ENCODE measurements at regions of chr14 and their contacts with region 1.

Region 1: DNA sequence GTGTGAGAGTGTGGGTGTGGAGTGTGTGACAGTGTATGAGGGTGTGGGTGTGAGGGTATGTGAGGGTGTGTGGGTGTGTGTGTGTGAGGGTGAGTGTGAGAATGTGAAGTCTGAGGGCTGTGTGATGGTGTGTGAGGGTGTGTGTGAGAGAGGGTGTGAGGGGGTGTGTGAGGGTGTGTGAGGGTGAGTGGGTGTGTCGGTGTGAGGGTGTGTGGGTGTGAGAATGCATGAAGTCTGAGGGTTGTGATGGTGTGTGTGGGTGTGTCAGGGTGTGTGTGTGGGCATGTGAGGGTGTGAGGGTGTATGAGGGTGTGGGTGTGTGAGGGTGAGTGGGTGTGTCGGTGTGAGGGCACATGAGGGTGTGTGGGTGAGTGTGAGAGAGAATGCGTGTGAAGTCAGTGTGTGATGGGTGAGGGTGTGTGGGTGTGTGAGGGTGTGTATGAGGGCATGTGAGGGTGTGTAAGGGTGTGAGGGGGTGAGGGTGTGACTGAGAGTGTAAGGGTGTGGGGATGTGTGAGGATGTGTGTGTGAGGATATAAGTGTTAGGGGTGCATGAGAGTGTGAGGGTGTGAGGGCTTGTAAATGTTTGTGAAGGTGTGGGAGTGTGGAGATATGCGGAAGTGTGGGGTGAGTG is 36.4 kb downstream of the TMEM121 start:
- DNase-seq: no peak
- H3K4me3 ChIP-seq: no peak overlapping the region
- H3K27ac ChIP-seq: no peak overlapping the region
- H3K4me1 ChIP-seq: no peaks in the 10 kb centered on the region
- H3K27me3 ChIP-seq: no peaks in the 10 kb centered on the region

Region 2: DNA sequence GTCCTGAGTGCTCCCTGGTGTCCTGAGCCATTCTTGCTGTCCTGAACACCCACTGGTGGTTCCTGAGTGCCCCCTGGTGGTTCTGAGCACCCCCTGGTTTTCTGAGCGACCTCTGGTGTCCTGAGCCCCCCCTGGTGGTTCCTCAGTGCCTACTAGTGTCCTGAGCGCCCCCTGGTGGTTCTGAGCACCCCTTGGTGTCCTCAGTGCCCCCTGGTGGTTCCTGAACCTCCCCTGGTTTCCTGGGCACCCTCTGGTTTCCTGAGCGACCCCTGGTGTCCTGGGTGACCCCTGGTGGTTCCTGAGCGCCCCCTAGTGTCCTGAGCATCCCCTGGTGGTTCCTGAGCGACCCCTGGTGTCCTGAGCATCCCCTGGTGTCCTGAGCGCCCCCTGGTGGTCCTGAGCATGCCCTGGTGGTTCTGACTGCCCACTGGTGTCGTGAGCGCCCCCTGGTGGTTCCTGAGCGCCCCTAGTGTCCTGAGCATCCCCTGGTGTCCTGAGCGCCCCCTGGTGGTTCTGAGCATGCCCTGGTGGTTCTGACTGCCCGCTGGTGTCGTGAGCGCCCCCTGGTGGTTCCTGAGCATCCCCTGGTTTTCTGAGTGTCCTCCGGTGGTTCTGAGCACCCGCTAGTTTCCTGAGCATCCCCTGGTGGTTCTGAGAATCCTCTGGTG is 436.7 kb after region 1 on chr14:
- in situ Hi-C with region 1: loop called (anchors 25 kb)
- DNase-seq: peak; percentile 58
- H3K4me3 ChIP-seq: no peak overlapping the region
- H3K27ac ChIP-seq: no peak overlapping the region
- H3K4me1 ChIP-seq: no peaks in the 10 kb centered on the region
- H3K27me3 ChIP-seq: no peaks in the 10 kb centered on the region